ENCODE measurements at regions of chr1 and their contacts with region 1.

Region 1: GRCh38 chr1:209747580-209748262 is 8.1 kb upstream of the TRAF3IP3 start:
- DNase-seq: peak; percentile 66 to 92 (median 82)

Region 2: GRCh38 chr1:209576798-209577197 is 170.9 kb before region 1 on chr1:
- intact Hi-C with region 1: loop called (anchors 5 kb)
- DNase-seq: peak; percentile 75 to 94 (median 86)

Region 3: DNA sequence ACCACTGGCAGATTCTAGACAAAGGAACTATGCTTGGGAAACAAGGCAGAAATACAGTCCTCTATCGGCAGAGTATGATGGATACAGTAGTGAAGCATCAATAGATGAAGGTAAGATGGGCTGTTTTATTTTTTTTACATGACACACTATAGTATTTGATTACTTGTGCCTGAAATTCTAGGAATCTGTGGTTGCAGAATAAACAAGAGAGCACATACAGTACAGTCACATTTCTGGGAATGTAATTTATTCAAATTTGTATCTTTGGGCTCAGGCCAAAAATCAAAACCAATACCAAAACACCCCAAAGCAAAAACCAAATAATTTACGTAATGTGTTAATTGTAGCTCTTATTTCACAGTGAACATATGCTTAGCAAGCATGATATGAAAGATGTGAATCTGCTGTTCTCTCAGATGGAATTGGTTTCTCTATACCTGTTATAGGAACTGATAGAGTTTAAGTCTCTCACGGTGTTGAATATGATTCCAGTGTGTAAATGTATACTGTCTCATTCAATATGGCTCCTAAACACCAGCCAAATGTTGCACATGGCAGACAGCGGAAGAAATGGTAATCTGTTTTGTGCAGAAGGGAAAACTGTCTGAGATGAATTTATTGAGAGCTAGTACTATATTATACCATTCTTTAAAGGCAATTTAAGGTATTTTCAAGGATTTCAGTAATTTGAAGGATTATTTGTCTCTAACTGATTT is 273.6 kb after region 1 on chr1:
- intact Hi-C with region 1: no loop called
- DNase-seq: no peak

Region 4: GRCh38 chr1:210677533-210677932 is 929.8 kb after region 1 on chr1:
- intact Hi-C with region 1: no loop called
- DNase-seq: no peak

Measured in head of caudate nucleus (tissue), 42 donors.